MCF 10A (cell line): ENCODE measurements at regions of chr11 and their contacts with region 1.

Region 1: DNA sequence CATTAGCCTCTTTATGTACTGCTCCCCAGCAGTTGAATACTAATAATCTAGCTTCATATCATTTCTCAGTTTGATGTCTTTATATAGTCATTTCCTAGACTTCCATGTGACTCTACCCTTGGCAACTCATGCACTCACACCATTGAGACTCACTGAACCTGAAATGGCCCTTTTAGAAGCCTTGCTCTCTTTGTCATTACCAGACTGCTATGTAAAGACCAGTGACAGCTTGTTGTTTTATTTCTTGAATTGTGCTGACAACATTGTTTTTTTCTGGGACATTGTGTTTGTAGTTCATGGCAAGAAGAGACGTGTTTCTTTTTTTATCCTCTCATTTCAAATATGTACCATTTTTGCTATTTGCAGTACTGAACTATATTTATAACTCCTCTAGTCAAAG is 256.5 kb downstream of the CNTN5 start:
- DNase-seq: no peak
- H3K4me3 Mint-ChIP-seq: no peak overlapping the region
- H3K27ac Mint-ChIP-seq: no peak overlapping the region
- H3K4me1 Mint-ChIP-seq: no peaks in the 10 kb centered on the region
- H3K27me3 Mint-ChIP-seq: peaks cover 92% of the 10 kb centered on the region
- CTCF ChIP-seq: no peak

Region 2: GRCh38 chr11:99229544-99229943 is 47.7 kb before region 1 on chr11:
- CTCF ChIA-PET with region 1: no interaction called
- POLR2A ChIA-PET with region 1: no interaction called
- intact Hi-C with region 1: loop called (anchors 1 kb)
- DNase-seq: no peak
- H3K4me3 Mint-ChIP-seq: no peak overlapping the region
- H3K27ac Mint-ChIP-seq: no peak overlapping the region
- H3K4me1 Mint-ChIP-seq: no peaks in the 10 kb centered on the region
- H3K27me3 Mint-ChIP-seq: peaks cover 58% of the 10 kb centered on the region
- CTCF ChIP-seq: no peak

Region 3: DNA sequence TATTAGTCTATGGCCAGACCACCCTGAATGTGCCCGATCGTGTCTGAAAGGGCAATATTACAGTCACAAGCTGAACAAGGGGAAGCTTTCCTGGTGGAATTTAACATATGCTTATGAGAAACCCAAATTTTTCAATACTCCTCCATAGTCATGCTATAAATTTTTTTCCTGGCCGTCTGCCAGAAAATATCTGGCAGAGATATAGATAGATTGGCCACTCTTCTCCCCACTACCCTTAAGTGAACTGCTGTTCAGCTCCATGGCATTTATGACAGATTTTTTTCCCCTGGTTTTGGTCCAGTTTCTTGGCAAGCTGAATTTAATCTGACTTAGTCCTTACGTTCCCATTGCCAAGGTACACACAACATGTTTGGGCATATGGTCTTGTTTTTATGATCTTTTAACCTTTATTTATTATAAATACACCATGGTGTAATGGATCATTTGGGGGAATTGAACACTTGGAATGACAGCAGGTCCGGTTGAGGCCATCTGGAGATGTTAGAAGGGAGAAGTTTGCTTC is 71.9 kb after region 1 on chr11:
- CTCF ChIA-PET with region 1: no interaction called
- POLR2A ChIA-PET with region 1: no interaction called
- intact Hi-C with region 1: loop called (anchors 10 kb)
- DNase-seq: no peak
- H3K4me3 Mint-ChIP-seq: no peak overlapping the region
- H3K27ac Mint-ChIP-seq: no peak overlapping the region
- H3K4me1 Mint-ChIP-seq: peaks cover 5% of the 10 kb centered on the region
- H3K27me3 Mint-ChIP-seq: no peaks in the 10 kb centered on the region
- CTCF ChIP-seq: no peak